Heart left ventricle (tissue), 16 donors: ENCODE measurements at regions of chr17 and their contacts with region 1.

Region 1: GRCh38 chr17:15157051-15157450 is 108.1 kb downstream of the PMP22 start:
- DNase-seq: no peak
- ATAC-seq: no peak
- H3K4me3 ChIP-seq: no peak overlapping the region
- H3K27ac ChIP-seq: no peak overlapping the region
- H3K4me1 ChIP-seq: peaks cover 0 to 4% (median 0%) of the 10 kb centered on the region in 12 donors
- H3K27me3 ChIP-seq: peaks cover 0 to 5% (median 0%) of the 10 kb centered on the region in 9 donors
- CTCF ChIP-seq: no peak
- POLR2A ChIP-seq: no peak

Region 2: DNA sequence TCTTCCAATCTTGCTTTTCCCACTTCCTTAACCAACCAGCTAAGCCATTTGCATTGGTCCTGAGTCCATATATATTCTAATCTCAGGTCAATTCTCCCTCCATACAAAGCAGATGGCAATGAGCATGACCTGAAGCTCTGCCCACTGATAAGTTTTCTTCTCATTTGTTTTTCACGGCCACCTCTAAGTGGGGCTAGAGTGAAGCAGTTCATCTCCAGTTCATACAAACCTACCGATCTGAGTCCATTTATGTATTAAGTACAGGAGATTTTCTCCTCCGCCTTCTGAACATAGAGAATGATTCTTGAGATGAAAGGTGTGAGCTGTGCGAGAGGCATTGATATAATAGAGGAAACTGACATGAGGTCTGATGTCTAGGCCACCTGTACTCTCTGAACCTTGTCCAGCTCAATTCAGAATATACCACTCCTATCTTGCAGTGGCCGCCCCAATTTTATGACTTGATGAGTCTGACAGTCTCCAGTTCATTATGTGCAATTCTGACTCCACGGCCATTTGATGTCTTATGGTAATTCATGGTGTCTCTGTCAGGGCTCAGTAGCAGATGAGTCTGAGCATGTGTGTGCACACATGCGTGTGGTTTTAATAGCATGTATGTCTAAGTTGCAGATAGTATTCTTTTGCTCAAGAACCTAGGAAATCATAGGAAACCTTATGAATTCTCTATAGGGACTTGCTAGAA is 221.8 kb before region 1 on chr17:
- intact Hi-C with region 1: loop called in 9 of 10 experiments (anchors 5 to 10 kb)
- DNase-seq: no peak
- ATAC-seq: no peak
- H3K4me3 ChIP-seq: no peak overlapping the region
- H3K27ac ChIP-seq: no peak overlapping the region
- H3K4me1 ChIP-seq: no peaks in the 10 kb centered on the region
- H3K27me3 ChIP-seq: peaks cover 0 to 6% (median 0%) of the 10 kb centered on the region in 9 donors
- CTCF ChIP-seq: no peak
- POLR2A ChIP-seq: no peak

Region 3: GRCh38 chr17:15076991-15077663 is 79.9 kb before region 1 on chr17:
- intact Hi-C with region 1: loop called in 2 of 10 experiments (anchors 10 kb)
- DNase-seq: no peak
- ATAC-seq: peak; percentile 62 to 94 (median 82)
- H3K4me3 ChIP-seq: no peak overlapping the region
- H3K27ac ChIP-seq: peak overlapping the region in 6 of 12 donors; percentile 2 to 51 (median 39)
- H3K4me1 ChIP-seq: peaks cover 0 to 11% (median 0%) of the 10 kb centered on the region in 12 donors
- H3K27me3 ChIP-seq: no peaks in the 10 kb centered on the region
- CTCF ChIP-seq: no peak
- POLR2A ChIP-seq: no peak

Region 4: DNA sequence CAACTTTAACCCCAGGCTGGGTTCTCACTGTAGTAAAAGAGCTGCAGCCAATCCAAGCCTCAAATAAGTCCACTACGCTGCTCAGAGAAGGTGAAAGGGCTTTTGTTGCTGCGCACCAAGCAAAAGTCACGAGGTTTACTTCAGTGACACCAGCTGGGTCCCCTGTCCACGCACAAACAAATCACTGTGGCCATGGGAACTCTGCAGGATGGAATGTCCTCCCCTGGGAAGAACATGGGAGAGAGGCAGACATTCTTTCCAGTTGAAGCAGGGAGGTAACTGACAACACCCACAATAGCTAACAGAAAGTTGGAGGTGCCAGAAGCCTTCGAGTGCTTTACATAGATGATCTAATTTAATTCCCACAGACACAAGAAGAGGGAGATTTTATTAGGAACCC is 73.8 kb before region 1 on chr17:
- intact Hi-C with region 1: loop called in 2 of 10 experiments (anchors 10 kb)
- DNase-seq: peak in 1 of 5 donors; percentile 78
- ATAC-seq: peak; percentile 42 to 84 (median 65)
- H3K4me3 ChIP-seq: no peak overlapping the region
- H3K27ac ChIP-seq: peak overlapping the region in 4 of 12 donors; percentile 20 to 77 (median 48)
- H3K4me1 ChIP-seq: peaks cover 0 to 13% (median 2%) of the 10 kb centered on the region in 12 donors
- H3K27me3 ChIP-seq: no peaks in the 10 kb centered on the region
- CTCF ChIP-seq: no peak
- POLR2A ChIP-seq: no peak